ENCODE measurements at regions of chr12 and their contacts with region 1.

Region 1: DNA sequence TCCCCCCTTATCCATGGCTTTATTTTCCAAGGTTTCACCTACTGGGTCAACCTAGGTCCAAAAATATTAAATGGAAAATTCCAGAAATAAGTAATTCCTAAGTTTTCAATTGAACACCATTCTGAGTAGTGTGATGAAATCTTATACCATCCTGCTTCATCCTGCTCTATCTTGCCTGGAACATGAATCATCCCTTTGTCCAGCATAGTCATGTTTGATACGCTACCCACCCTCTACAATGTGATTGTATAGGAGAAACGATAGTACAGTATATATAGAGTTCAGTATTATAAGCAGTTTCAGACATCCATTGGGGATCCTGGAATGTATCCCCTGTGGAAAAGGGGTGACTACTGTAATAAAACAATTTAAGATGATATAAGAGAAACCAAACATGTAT is 62.2 kb downstream of the IFNG start:
- DNase-seq: no peak
- ATAC-seq: no peak
- H3K4me3 Mint-ChIP-seq: no peak overlapping the region
- H3K27ac Mint-ChIP-seq: no peak overlapping the region
- H3K4me1 Mint-ChIP-seq: peaks cover 12% of the 10 kb centered on the region
- H3K27me3 Mint-ChIP-seq: no peaks in the 10 kb centered on the region
- CTCF ChIP-seq: no peak

Region 2: DNA sequence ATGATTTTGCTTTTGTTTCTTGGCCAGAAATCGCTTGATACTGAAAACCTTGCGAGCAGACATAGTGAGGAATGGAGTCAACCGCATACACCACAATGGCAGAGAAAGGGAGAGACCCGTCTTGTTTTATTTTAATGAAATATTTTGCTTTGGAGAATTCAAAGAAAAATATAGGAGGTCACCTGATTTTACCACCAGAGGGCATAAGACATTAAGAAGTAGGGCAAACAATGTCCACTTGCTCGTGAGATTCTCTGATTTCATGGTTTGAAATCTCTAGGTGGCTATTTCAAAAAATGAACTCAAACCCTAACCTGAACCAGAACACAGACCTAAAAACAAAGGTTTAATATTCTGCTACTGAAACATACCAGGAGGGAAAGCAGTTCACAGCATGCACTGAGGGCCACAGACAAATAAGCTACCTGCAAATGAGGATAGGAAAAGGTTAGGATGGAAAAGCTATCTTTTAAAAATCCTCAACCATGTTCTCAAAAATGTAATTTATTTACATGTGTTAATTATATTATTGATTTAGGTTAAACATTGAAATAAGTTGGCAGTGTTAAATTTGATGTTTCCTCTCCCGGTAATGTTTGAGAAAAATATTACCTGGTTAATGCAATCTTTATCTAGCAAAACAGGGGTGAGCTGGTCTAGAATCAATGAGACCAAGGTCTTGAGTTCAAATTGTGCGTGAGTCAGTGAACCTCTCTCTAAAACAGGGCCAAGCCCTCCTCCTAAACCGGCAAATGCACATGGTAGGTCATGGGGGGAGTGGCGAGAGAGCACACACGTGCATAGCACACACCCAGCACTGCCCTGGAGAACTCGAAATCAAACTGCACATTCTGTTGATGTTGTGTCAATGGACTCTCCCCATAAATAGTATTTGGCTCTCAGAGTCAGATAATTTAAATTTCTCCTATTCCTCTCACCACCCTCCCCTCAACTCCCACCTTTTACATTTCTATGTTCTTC is 95.6 kb before region 1 on chr12:
- CTCF ChIA-PET with region 1: no interaction called
- POLR2A ChIA-PET with region 1: no interaction called
- DNase-seq: no peak
- ATAC-seq: no peak
- H3K4me3 Mint-ChIP-seq: no peak overlapping the region
- H3K27ac Mint-ChIP-seq: no peak overlapping the region
- H3K4me1 Mint-ChIP-seq: no peaks in the 10 kb centered on the region
- H3K27me3 Mint-ChIP-seq: peaks cover 6% of the 10 kb centered on the region
- CTCF ChIP-seq: no peak

Region 3: DNA sequence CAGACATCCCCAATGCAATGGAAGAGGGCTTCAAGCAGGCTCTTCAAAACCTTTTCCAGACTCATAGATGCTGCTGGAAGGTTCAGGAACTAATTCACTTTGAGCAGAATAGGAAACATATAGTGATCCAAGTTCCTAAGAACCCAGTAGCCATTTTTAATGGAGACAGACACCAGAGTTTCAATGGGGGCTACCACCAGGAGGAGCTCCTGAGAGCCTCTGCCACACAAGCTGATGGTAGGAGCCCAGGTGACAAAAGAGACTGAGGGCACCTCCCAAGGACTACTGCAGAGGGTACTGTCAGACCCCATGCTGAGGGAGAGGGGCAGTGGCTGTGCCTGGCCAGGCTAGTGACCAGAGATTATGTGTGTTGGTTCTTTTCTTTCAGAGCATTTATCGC is 16.3 kb after region 1 on chr12:
- CTCF ChIA-PET with region 1: interaction called, 14 read pairs
- POLR2A ChIA-PET with region 1: no interaction called
- DNase-seq: peak; percentile 69
- ATAC-seq: peak; percentile 85
- H3K4me3 Mint-ChIP-seq: no peak overlapping the region
- H3K27ac Mint-ChIP-seq: no peak overlapping the region
- H3K4me1 Mint-ChIP-seq: peaks cover 12% of the 10 kb centered on the region
- H3K27me3 Mint-ChIP-seq: peaks cover 4% of the 10 kb centered on the region
- CTCF ChIP-seq: peak; percentile 34; the same call in 1 of the 2 replicates

Region 4: DNA sequence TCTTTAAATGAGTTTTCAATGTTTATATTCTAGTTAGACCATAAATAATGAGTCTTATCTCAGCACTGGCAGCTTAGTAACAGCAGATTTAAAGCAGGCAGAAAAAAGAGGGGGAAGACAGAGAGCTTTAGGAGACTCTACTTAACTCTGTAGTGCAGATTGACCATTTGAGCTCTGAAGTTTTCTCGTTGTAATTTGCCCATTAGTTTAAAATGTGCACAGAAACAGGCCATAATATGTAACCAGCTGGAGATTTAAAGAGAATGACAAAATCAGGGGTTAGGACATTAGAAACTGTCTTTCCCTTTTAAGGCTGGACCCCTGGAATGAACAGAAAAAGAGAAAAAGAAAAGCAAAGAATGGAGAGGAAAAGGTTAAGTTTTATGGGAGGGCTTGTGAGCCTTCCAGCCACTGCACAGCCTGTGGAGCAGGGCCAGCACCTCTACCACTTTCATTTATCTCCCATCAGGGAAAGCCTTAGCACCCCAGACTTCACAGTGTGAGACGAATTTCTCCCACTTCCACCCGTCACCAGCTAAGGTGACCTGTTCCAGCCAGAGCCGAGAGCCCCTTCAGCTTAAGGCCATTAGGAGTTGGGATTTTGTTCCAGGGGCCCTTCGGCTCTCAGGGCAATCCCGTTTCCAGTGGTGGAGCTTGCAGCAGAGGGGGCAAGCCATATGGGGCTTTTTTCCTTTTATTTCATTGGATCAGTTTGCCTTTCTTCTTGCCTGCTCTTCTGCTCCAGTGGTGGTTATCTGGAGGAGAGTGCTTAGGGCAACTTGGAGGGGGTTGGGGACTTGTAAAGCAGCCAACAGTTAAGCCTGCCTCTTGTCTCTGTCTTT is 148.0 kb after region 1 on chr12:
- CTCF ChIA-PET with region 1: no interaction called
- POLR2A ChIA-PET with region 1: no interaction called
- DNase-seq: no peak
- ATAC-seq: no peak
- H3K4me3 Mint-ChIP-seq: no peak overlapping the region
- H3K27ac Mint-ChIP-seq: no peak overlapping the region
- H3K4me1 Mint-ChIP-seq: no peaks in the 10 kb centered on the region
- H3K27me3 Mint-ChIP-seq: peaks cover 3% of the 10 kb centered on the region; the same call in 1 of the 2 replicates
- CTCF ChIP-seq: no peak